ENCODE measurements at regions of chr9 and their contacts with region 1.

Region 1: GRCh38 chr9:19174127-19174912 is 47.0 kb upstream of the PLIN2 start:
- DNase-seq: peak; percentile 93
- H3K4me3 ChIP-seq: no peak overlapping the region
- CTCF ChIP-seq: peak; percentile 33

Region 2: DNA sequence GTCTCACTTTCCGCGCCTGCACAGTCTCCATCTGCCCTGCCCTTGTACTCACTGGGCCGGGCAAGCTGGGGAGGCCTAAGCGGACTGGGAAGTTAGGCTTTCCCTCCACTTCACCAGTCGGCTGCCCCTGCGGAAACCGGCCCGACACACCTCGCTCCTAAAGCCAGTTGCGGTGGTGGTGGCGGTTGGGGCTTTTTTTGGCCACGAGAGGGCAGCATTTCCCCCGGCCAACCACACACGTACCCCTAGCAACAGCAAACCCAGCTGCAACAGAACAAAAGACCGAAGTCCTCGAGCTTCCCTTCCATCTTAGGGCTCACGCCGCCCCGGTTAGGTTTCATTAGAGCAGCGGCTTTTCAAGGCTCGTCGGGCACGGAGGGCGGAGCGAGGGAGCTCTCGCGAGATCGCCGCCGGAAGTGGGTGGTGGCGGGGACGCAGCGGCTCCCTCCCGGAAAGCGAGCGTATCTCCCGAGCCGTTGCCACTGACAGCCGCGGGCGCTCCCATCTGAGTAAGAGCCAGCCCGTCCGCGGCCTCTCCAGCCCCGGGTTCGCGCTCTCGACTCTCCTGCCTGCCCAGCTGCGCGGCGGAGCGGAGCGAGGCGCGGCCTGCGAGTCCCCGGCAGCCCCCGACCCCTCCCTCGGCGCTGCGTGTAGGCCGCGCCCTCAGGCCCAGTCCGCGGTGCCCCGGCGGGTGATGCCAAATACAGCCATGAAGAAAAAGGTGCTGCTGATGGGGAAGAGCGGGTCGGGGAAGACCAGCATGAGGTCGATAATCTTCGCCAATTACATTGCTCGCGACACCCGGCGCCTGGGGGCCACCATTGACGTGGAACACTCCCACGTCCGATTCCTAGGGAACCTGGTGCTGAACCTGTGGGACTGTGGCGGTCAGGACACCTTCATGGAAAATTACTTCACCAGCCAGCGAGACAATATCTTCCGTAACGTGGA is 125.1 kb before region 1 on chr9 and contains the start of gene RRAGA:
- CTCF ChIA-PET with region 1: interaction called, 82 read pairs
- POLR2A ChIA-PET with region 1: interaction called, 12 read pairs
- DNase-seq: peak; percentile 85
- H3K4me3 ChIP-seq: peak within 1 kb of the TSS; percentile 69
- CTCF ChIP-seq: peak; percentile 84

Region 3: DNA sequence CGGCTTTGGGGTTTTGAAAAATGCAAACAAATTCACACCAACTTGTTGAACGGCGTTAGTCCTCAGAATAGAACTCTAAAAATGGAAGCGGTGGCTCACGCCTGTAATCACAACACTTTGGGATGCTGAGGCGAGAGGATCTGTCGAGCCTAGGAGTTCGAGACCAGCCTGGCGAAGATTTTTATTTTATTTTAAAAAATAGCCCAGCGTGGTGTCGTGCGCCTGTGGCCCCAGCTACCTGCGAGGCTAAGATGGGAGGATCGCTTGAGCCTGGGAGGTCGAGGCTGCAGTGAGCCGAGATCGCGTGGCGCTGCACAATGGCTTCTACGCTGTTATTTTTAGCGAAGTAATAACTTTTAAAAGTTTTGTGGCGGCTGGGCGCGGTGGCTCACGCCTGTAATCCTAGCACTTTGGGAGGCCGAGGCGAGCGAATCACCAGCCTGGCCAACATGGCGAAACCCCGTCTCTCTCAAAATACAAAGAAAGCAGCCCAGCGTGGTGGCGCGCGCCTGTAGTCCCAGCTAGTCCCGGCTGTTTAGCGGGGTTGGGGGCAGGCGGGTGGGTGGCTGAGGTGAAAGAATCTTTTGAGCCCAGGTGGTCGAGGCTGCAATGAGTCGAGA is 46.3 kb before region 1 on chr9:
- CTCF ChIA-PET with region 1: interaction called, 10 read pairs
- POLR2A ChIA-PET with region 1: no interaction called
- DNase-seq: no peak
- H3K4me3 ChIP-seq: peak overlapping the region; percentile 81
- CTCF ChIP-seq: no peak

Region 4: DNA sequence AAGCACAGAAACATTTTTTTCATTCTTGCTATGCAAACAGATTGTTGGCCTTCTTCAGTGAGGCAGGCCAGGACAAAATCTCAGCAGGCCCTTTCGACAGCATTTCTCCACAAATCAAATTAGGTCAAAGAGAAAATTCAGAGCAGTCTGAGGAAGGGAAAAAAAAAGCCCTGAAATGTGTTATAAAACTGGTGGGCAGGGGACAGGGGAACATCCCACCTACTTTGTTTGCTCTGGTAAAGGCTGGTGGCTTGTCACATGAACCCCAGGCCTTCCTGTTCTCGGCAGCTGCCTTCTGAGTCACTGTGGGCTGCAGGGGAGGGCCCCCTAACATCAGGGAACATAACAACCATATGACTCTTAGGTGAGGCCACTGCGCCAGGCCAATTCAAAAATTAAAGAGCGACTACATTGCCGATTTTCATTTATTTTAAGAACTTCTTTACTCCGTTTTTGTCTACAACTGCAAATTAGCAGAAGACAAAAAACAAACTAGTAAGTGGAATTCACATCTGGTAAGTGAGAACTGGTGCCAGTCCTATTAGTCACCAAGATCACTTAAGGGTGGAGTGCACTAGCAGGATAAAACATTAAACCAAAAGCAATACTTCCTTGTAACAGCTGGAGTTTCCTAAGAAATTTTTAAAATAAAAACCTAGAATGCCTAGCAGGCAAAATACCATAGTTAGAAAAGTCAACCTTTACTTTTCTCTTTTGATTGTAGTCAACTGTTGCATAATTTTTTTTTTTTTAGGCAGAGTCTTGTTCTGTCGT is 10.0 kb after region 1 on chr9:
- CTCF ChIA-PET with region 1: interaction called, 36 read pairs
- POLR2A ChIA-PET with region 1: interaction called, 4 read pairs
- DNase-seq: peak; percentile 55
- H3K4me3 ChIP-seq: no peak overlapping the region
- CTCF ChIP-seq: no peak

Region 5: DNA sequence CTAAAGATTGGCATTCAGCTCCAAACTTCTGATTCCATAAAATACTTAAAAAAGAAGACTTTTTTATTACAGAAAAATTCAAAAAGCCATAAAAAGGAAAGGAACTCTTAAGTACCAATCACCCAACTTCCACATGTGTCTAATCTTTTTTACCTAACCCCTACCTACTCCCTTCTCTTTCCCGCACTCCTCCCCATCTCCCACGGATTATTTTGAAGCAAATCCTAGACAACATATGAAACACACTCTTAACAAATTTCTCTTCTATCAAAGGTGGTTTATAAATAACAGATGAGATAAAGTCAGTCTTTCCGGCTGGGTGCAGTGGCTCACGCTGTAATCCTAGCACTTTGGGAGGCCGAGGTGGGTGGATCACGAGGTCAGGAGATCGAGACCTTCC is 50.2 kb after region 1 on chr9:
- CTCF ChIA-PET with region 1: no interaction called
- POLR2A ChIA-PET with region 1: no interaction called
- DNase-seq: no peak
- H3K4me3 ChIP-seq: no peak overlapping the region
- CTCF ChIP-seq: no peak

Measured in AG04449 (cell line).